MCF 10A (cell line): ENCODE measurements at regions of chr19 and their contacts with region 1.

Region 1: DNA sequence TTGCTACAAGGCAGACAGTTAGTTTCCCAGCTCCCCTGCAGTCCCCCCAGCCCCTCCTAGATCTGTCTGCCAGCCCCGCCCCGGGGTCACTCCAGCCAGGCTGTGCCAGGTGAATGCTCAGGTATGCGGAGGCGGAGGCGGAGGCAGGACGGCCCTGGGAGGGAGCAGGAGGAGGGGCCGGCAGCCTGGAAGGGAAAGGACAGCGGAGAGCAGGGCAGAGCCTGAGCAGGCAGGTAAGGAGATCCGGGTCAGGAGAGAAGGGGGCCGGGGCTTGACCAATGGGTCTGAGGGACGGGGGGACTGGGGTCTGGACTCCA is at the start of gene EPS8L1:
- DNase-seq: peak; percentile 62
- H3K4me3 Mint-ChIP-seq: peak within 1 kb of the TSS; percentile 70
- H3K27ac Mint-ChIP-seq: peak within 1 kb of the TSS; percentile 39
- H3K4me1 Mint-ChIP-seq: peaks cover 32% of the 10 kb centered on the region
- H3K27me3 Mint-ChIP-seq: no peaks in the 10 kb centered on the region
- CTCF ChIP-seq: no peak
- total RNA-seq, gene EPS8L1: 9.9 and 17.9 TPM in 2 replicates

Region 2: GRCh38 chr19:54928299-54928698 is 147.3 kb before region 1 on chr19:
- CTCF ChIA-PET with region 1: no interaction called
- POLR2A ChIA-PET with region 1: no interaction called
- intact Hi-C with region 1: no loop called
- DNase-seq: peak; percentile 5
- H3K4me3 Mint-ChIP-seq: no peak overlapping the region
- H3K27ac Mint-ChIP-seq: no peak overlapping the region
- H3K4me1 Mint-ChIP-seq: no peaks in the 10 kb centered on the region
- H3K27me3 Mint-ChIP-seq: no peaks in the 10 kb centered on the region
- CTCF ChIP-seq: no peak

Region 3: GRCh38 chr19:55062734-55063492 is 12.7 kb before region 1 on chr19 and contains the start of gene RDH13:
- CTCF ChIA-PET with region 1: no interaction called
- POLR2A ChIA-PET with region 1: interaction called, 11 read pairs
- intact Hi-C with region 1: no loop called
- DNase-seq: peak; percentile 96
- H3K4me3 Mint-ChIP-seq: peak within 1 kb of the TSS; percentile 83
- H3K27ac Mint-ChIP-seq: peak within 1 kb of the TSS; percentile 78
- H3K4me1 Mint-ChIP-seq: no peaks in the 10 kb centered on the region
- H3K27me3 Mint-ChIP-seq: peaks cover 16% of the 10 kb centered on the region
- CTCF ChIP-seq: no peak
- total RNA-seq, gene RDH13: 20.2 and 25.8 TPM in 2 replicates

Region 4: DNA sequence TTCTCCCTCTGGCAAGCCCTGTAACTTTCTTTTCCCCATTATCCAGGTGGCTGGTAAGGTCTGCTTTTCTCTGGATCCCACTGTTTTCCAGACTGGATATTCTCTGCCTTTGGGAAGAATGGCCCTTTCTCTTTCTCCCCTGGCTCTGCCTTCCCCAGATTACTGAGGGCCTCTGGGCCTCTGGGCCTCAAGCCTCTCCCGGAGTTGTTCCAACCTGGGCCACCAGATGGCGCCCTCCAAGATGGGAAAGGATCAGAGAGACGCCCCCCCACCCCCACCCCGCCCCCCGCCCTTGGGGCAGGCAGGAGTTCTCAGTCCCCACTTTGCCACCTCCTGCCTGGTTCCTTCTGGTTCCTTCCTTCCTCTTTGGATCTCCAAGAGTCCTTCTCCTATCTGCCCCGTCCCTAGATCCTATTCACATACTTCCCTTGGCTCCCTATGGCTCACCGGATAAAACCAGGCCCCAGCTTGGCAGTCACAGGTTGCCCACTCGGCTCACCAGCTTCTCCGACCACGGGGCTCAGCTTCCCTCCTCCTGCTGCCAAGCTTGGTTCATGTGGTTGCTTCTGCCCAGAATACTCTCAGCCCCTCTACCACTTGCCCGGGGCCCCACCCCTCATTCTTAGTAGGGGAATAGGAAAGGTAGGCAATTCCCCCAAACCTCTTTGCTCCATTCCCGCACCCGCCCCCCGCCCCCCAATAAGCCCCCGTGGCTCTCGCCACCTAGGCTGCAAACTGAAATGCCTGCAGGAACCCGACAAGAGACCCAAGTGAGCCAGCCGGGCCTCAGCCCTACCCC is 13.1 kb after region 1 on chr19:
- CTCF ChIA-PET with region 1: interaction called, 29 read pairs
- POLR2A ChIA-PET with region 1: no interaction called
- intact Hi-C with region 1: no loop called
- DNase-seq: peak; percentile 69
- H3K4me3 Mint-ChIP-seq: no peak overlapping the region
- H3K27ac Mint-ChIP-seq: no peak overlapping the region
- H3K4me1 Mint-ChIP-seq: peaks cover 10% of the 10 kb centered on the region
- H3K27me3 Mint-ChIP-seq: no peaks in the 10 kb centered on the region
- CTCF ChIP-seq: peak; percentile 82

Region 5: DNA sequence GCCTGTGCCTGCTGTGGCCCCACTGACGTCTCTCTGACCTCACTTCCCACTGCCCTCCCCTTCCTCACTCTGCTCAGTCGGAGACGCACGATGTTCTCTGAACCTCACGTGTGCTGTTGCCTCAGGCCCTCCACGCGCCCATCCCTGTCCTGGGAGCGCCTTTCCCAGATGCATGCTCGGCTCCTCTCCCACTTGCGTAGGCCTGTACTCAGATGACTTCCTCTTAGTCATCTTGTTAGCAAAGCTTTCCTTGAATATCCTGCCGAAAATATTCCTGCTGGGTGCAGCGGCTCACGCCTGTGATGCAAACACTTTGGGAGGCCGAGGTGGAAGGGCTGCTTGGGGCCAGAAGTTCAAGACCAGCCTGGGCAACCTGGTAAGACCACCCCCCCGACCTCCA is 113.8 kb after region 1 on chr19:
- CTCF ChIA-PET with region 1: no interaction called
- POLR2A ChIA-PET with region 1: no interaction called
- intact Hi-C with region 1: no loop called
- DNase-seq: peak; percentile 100
- H3K4me3 Mint-ChIP-seq: peak overlapping the region; percentile 64
- H3K27ac Mint-ChIP-seq: peak overlapping the region; percentile 99
- H3K4me1 Mint-ChIP-seq: peaks cover 14% of the 10 kb centered on the region
- H3K27me3 Mint-ChIP-seq: no peaks in the 10 kb centered on the region
- CTCF ChIP-seq: no peak